Naive thymus-derived CD8-positive, alpha-beta T cell (primary cell): ENCODE measurements at regions of chr17 and their contacts with region 1.

Region 1: GRCh38 chr17:45148183-45149036 is at the start of gene HEXIM1:
- DNase-seq: peak; percentile 95 to 100 (median 99)
- ATAC-seq: peak; percentile 74 to 83
- H3K4me3 Mint-ChIP-seq: peak within 1 kb of the TSS; percentile 93 to 99 (median 96)
- H3K27ac Mint-ChIP-seq: peak within 1 kb of the TSS; percentile 97 to 100 (median 100)
- H3K4me1 Mint-ChIP-seq: peaks cover 36 to 75% (median 55%) of the 10 kb centered on the region in 4 donors
- H3K27me3 Mint-ChIP-seq: peaks cover 0 to 3% (median 0%) of the 10 kb centered on the region in 5 donors
- polyA plus RNA-seq, gene HEXIM1: 4.9 to 6.8 (median 5.4) TPM

Region 2: GRCh38 chr17:45123930-45124796 is 24.2 kb before region 1 on chr17:
- POLR2A ChIA-PET with region 1: no interaction called
- DNase-seq: no peak
- ATAC-seq: peak in 1 of 2 donors; percentile 42
- H3K4me3 Mint-ChIP-seq: no peak overlapping the region
- H3K27ac Mint-ChIP-seq: peak overlapping the region in 1 of 10 donors; percentile 7
- H3K4me1 Mint-ChIP-seq: peaks cover 0 to 2% (median under 1%) of the 10 kb centered on the region in 4 donors
- H3K27me3 Mint-ChIP-seq: peaks cover 0 to 8% (median 2%) of the 10 kb centered on the region in 5 donors

Region 3: GRCh38 chr17:45135192-45135977 is 13.0 kb before region 1 on chr17 and contains the start of gene ACBD4:
- POLR2A ChIA-PET with region 1: interaction called, 195 read pairs
- DNase-seq: peak; percentile 92 to 100 (median 98)
- ATAC-seq: peak; percentile 86 to 88
- H3K4me3 Mint-ChIP-seq: peak within 1 kb of the TSS; percentile 86 to 94 (median 90)
- H3K27ac Mint-ChIP-seq: peak within 1 kb of the TSS; percentile 65 to 95 (median 88)
- H3K4me1 Mint-ChIP-seq: peaks cover 8 to 26% (median 18%) of the 10 kb centered on the region in 4 donors
- H3K27me3 Mint-ChIP-seq: peaks cover 0 to 3% (median 3%) of the 10 kb centered on the region in 5 donors
- polyA plus RNA-seq, gene ACBD4: 10.5 to 17.4 (median 11.7) TPM

Region 4: GRCh38 chr17:45172454-45173286 is 24.3 kb after region 1 on chr17:
- POLR2A ChIA-PET with region 1: interaction called, 111 read pairs
- DNase-seq: peak; percentile 30 to 85 (median 48)
- ATAC-seq: peak; percentile 85
- H3K4me3 Mint-ChIP-seq: peak overlapping the region; percentile 75 to 89 (median 82)
- H3K27ac Mint-ChIP-seq: peak overlapping the region; percentile 91 to 98 (median 94)
- H3K4me1 Mint-ChIP-seq: peaks cover 6 to 32% (median 30%) of the 10 kb centered on the region in 4 donors
- H3K27me3 Mint-ChIP-seq: no peaks in the 10 kb centered on the region

Region 5: GRCh38 chr17:45218895-45219661 is 70.7 kb after region 1 on chr17:
- POLR2A ChIA-PET with region 1: interaction called, 159 read pairs
- DNase-seq: peak; percentile 70 to 95 (median 85)
- ATAC-seq: peak; percentile 20 to 28
- H3K4me3 Mint-ChIP-seq: peak overlapping the region; percentile 89 to 96 (median 92)
- H3K27ac Mint-ChIP-seq: peak overlapping the region; percentile 74 to 96 (median 87)
- H3K4me1 Mint-ChIP-seq: peaks cover 24 to 55% (median 41%) of the 10 kb centered on the region in 4 donors
- H3K27me3 Mint-ChIP-seq: no peaks in the 10 kb centered on the region

Region 6: GRCh38 chr17:45247429-45248131 is 99.2 kb after region 1 on chr17:
- POLR2A ChIA-PET with region 1: interaction called, 29 read pairs
- DNase-seq: peak; percentile 90 to 98 (median 92)
- ATAC-seq: peak; percentile 76 to 79
- H3K4me3 Mint-ChIP-seq: peak overlapping the region; percentile 85 to 93 (median 92)
- H3K27ac Mint-ChIP-seq: peak overlapping the region; percentile 92 to 99 (median 98)
- H3K4me1 Mint-ChIP-seq: peaks cover 20 to 73% (median 71%) of the 10 kb centered on the region in 4 donors
- H3K27me3 Mint-ChIP-seq: no peaks in the 10 kb centered on the region

Region 7: GRCh38 chr17:45311760-45312476 is 163.5 kb after region 1 on chr17:
- POLR2A ChIA-PET with region 1: interaction called, 26 read pairs
- DNase-seq: peak; percentile 29 to 70 (median 54)
- ATAC-seq: peak; percentile 7 to 21
- H3K4me3 Mint-ChIP-seq: peak overlapping the region; percentile 76 to 95 (median 87)
- H3K27ac Mint-ChIP-seq: peak overlapping the region; percentile 91 to 100 (median 98)
- H3K4me1 Mint-ChIP-seq: peaks cover 56 to 88% (median 82%) of the 10 kb centered on the region in 4 donors
- H3K27me3 Mint-ChIP-seq: no peaks in the 10 kb centered on the region

Region 8: GRCh38 chr17:45385331-45385997 is 237.1 kb after region 1 on chr17:
- POLR2A ChIA-PET with region 1: no interaction called
- DNase-seq: peak; percentile 72 to 92 (median 86)
- ATAC-seq: peak; percentile 91 to 99
- H3K4me3 Mint-ChIP-seq: peak overlapping the region in 2 of 10 donors; percentile 9 to 18
- H3K27ac Mint-ChIP-seq: peak overlapping the region in 2 of 10 donors; percentile 47 to 67
- H3K4me1 Mint-ChIP-seq: peaks cover 9 to 39% (median 16%) of the 10 kb centered on the region in 4 donors
- H3K27me3 Mint-ChIP-seq: peaks cover 0 to 16% (median 4%) of the 10 kb centered on the region in 5 donors